ENCODE measurements at regions of chr20 and their contacts with region 1.

Region 1: DNA sequence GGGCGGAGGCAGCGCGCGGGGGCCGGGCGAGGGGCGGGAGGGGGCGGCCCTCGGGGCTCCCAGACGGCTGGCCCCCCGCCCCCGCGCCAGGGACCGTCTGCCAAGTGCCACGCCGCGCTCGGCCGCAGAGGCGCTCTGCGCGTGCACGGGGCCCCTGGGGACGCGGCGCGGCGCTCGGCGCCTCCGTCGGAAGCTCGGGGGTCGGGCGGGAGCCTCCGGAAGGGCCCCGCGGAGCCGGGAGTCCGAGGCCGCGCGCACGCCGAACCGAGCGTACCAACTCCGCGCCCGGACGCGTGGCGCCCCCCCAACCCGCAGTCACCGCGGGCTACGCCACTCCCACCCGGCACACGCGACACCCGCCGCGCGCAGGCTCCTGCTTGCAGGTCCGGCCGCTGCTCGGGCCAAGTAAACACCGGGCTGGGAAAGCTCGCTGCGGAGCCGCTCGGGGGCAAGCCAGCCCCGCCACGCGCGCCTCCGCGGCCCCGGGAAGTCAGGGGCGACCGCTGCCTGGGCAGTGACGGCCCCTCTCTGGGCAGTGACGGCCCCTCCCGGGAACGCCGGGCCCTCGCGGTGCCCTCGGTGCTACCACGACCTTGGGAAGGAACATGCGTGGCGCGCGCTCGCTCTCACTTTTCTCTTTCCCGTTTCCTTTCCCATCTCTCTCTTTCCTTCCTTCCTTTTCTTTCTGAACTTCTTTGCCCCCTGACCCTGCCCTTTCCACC is 384 bp upstream of the PREX1 start:
- DNase-seq: peak; percentile 84
- H3K4me3 Mint-ChIP-seq: peak overlapping the region; percentile 85
- H3K27ac Mint-ChIP-seq: peak overlapping the region; percentile 92
- H3K4me1 Mint-ChIP-seq: peaks cover 55% of the 10 kb centered on the region
- H3K27me3 Mint-ChIP-seq: peaks cover 7% of the 10 kb centered on the region

Region 2: DNA sequence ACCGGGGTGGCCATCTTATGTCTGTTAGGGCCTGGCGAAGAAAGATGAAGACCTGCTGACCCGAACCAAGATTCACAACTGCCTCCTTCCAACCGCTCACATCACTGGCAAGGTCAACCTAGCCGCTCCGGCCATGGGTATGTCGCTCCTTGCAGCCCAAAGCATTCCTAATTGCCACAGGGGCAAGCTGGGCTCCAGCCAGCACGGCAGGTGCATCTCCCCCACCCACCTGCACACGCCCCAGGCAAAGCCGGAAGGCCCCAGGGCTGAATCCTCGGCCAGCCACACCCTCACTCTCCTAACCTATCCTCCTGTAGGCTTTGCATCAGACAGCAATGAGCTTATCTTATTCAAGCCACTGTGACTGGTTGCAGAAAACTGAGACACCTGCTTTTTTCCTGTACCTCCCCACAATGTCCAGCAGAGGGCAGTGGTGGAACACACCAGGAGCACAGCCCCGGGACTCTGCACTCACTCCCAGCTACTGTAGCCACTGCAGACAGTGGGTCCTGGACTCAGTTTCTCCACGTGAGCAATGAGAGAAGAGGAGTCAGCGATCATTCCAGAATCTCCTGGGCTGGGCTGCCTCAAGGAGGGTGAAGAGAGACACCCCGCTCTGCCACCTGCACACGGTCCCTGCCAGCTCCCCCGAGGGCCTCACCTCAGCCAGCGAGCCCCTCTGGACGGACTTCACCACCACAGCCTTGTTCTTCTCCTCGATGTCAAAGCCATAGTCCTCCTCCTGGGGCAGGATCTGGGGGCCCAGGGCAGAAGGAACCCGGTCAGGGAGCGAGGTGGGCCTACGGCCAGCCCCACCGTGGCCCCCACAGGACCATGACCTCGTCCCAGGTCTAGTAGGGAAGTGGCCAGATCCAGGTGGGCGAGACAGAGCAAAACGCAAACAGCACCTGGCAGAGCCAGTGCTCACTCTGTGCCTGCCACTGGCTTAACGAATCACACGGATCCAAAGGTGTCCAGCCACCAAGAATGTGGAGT is 170.4 kb before region 1 on chr20:
- intact Hi-C with region 1: loop called (anchors 1 kb)
- DNase-seq: peak; percentile 50
- H3K4me3 Mint-ChIP-seq: no peak overlapping the region
- H3K27ac Mint-ChIP-seq: peak overlapping the region; percentile 24
- H3K4me1 Mint-ChIP-seq: peaks cover 10% of the 10 kb centered on the region
- H3K27me3 Mint-ChIP-seq: no peaks in the 10 kb centered on the region

Region 3: DNA sequence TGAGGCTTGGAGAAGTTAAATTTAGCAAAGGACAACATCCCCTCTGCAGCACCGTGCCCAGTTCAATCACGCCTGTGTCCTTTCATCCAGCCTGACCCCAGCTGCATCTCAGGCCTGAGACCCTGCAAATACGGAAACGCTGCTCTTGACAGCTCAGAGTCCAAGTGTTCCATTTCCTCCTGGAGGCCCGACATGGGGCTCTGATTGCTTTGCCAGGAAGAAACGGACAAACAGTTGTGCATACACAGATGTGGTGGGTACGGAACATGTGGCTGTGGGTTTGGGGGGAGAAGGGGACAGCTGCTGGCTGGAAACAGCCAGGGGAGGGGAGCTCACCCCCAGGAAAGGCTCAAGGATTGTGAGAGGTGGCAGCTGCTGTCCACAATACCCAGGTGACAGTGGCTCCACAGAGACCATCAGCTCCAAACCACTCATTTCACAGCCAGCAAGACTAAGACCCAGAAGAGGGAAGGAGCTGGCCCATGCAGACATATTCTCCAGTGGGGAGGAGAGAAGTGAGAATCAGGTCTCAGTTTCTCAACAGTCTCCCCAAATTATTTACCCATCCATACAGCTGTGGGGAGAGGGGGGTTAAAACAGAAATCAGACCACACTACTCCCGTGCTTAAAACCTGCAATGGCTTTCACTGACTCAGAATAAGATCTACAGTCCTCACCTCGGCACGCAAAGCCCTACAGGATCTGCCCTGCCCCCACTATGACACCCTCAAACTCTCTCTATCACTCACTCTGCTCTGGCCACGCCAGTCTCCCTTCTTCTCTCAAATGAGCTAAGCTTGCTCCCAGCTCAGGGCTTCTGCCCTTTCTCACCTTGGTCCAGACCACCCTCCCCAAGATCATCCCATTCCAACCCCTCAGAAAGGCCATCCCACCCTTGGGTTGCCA is 89.5 kb before region 1 on chr20:
- intact Hi-C with region 1: loop called (anchors 1 kb)
- DNase-seq: peak; percentile 69
- H3K4me3 Mint-ChIP-seq: peak overlapping the region; percentile 54
- H3K27ac Mint-ChIP-seq: peak overlapping the region; percentile 95
- H3K4me1 Mint-ChIP-seq: peaks cover 68% of the 10 kb centered on the region
- H3K27me3 Mint-ChIP-seq: no peaks in the 10 kb centered on the region

Region 4: DNA sequence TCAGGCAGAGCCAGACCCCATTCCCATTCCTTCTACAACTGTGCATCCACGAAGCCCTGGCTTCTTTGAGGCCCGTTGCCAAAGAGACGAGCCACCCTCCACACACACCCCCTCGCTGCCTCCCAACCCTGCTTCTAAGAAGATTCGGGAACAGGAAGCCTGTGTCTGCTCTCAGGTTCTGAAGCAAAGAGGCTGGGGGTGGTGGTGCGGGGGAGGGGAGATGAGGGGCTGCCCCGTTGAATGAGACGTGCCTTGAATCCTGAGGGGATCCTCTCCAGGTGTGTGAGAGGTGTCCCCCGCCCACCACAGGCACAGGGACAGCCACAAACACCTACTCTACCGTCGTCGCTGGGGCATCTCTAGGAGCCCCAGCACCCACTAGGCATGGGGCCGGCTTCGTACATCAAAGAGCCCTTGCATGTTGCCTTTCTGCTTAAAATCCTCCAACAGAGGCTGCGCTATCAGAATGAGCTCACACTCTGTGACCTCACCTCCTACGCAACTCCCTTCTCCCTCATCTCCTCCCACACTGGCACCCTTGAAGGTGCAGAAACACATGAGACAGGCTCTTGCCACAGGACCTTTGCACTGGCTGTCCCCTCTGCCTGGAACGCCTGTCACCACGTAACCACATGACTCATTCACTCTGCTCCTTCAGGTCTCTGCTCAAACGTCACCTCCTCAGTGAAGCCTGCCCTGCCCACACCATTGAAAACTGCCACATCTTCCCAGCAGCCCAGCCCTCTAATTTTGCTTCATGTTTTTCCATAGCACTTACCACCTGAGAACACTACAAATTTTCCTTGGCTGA is 58.9 kb before region 1 on chr20:
- intact Hi-C with region 1: loop called (anchors 1 kb)
- DNase-seq: peak; percentile 86
- H3K4me3 Mint-ChIP-seq: peak overlapping the region; percentile 66
- H3K27ac Mint-ChIP-seq: peak overlapping the region; percentile 89
- H3K4me1 Mint-ChIP-seq: peaks cover 87% of the 10 kb centered on the region
- H3K27me3 Mint-ChIP-seq: no peaks in the 10 kb centered on the region

Region 5: DNA sequence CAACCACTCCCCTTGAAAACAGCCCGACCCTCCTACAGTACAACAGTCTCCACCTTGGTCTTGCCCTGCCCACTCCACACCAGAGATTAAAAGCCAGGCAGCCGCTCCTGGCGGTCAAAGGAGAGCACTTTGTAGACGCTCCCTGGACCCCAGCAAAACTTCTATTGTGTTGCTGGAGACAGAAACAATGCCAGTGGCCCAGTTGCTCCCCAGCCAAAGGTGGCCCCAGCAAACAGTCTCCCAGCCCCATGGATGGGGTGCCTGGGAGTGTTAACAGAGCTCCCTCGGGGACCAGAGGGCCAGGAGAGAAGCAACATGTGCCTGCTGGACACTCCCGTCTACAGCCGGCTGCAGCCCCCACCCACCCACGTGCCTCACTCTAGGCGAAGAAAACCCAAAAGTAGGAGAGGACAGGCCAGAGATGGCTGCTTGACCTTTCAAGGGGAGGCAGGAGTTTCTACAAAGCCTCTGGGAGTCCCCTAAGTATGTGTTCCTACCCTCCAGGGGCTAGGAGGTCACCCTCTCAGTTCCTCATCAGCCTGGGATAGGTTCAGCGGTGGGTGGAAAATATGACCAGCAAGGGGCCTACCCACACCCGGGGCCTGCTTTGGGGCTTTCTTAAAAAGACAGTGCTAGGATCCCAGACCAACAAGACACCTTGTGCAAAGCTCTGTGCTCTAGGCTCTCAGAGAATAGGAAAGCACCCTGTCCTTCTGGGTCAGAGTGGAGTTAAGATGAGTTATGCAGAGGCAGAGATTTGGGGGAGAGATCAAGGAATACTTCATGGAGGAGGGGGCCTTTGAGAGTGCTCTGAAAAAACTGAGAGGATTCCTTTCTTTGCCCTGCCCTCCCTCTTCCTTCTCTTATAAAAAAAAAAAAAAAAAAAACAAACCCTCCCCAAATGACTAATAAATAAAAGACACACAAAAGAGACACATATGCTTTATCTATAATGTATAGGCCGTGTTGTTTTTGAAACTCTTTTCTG is 18.6 kb after region 1 on chr20:
- intact Hi-C with region 1: loop called (anchors 1 kb)
- DNase-seq: no peak
- H3K4me3 Mint-ChIP-seq: peak overlapping the region; percentile 32
- H3K27ac Mint-ChIP-seq: peak overlapping the region; percentile 98
- H3K4me1 Mint-ChIP-seq: peaks cover 23% of the 10 kb centered on the region
- H3K27me3 Mint-ChIP-seq: peaks cover 18% of the 10 kb centered on the region

Region 6: GRCh38 chr20:48921151-48921898 is 93.1 kb after region 1 on chr20 and contains the start of gene ARFGEF2:
- intact Hi-C with region 1: loop called (anchors 1 kb)
- DNase-seq: peak; percentile 96
- H3K4me3 Mint-ChIP-seq: peak within 1 kb of the TSS; percentile 98
- H3K27ac Mint-ChIP-seq: peak within 1 kb of the TSS; percentile 99
- H3K4me1 Mint-ChIP-seq: peaks cover 50% of the 10 kb centered on the region
- H3K27me3 Mint-ChIP-seq: peaks cover 4% of the 10 kb centered on the region
- total RNA-seq, gene ARFGEF2: 28.3 and 30.1 TPM in 2 replicates

Region 7: GRCh38 chr20:49278036-49278817 is 450.0 kb after region 1 on chr20 and contains the start of gene ZNFX1:
- intact Hi-C with region 1: loop called (anchors 2 kb)
- DNase-seq: peak; percentile 98
- H3K4me3 Mint-ChIP-seq: peak within 1 kb of the TSS; percentile 99
- H3K27ac Mint-ChIP-seq: peak within 1 kb of the TSS; percentile 98
- H3K4me1 Mint-ChIP-seq: peaks cover 61% of the 10 kb centered on the region
- H3K27me3 Mint-ChIP-seq: no peaks in the 10 kb centered on the region
- total RNA-seq, gene ZNFX1: 68.9 and 70.4 TPM in 2 replicates